ENCODE measurements at regions of chr6 and their contacts with region 1.

Region 1: DNA sequence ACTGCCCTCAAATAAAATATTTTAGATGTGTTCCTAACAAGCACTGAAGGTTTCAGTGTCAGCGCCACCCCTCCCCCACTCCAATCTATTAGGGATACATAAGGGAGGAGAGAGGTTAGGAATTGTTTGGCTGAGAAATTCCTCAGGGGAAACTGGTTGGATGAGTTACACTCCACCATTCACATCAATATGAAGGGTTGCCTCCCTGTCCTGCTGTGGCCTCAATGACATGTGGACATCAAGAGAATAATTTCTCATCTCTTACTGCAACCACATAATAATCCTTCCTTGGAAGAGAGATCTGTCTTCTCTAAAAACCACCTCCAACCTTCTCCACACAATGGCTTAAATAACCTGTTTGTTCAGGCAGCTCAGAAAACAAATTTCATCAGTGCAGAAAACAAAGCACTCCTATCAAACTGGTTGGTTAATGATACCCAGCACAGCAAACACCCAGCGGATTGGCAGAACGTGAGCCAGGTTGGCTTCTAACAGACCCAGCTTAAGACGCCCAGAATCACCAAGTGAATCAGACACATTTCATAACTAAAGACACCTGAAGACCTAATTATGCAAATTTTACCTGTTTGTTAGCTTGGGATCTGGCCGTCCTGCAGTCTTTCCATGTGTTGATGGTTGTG is 136.1 kb upstream of the SGK1 start:
- DNase-seq: peak; percentile 49
- H3K4me3 Mint-ChIP-seq: peak overlapping the region; percentile 42
- H3K27ac Mint-ChIP-seq: peak overlapping the region; percentile 19
- H3K4me1 Mint-ChIP-seq: peaks cover 26% of the 10 kb centered on the region
- H3K27me3 Mint-ChIP-seq: no peaks in the 10 kb centered on the region
- CTCF ChIP-seq: no peak

Region 2: DNA sequence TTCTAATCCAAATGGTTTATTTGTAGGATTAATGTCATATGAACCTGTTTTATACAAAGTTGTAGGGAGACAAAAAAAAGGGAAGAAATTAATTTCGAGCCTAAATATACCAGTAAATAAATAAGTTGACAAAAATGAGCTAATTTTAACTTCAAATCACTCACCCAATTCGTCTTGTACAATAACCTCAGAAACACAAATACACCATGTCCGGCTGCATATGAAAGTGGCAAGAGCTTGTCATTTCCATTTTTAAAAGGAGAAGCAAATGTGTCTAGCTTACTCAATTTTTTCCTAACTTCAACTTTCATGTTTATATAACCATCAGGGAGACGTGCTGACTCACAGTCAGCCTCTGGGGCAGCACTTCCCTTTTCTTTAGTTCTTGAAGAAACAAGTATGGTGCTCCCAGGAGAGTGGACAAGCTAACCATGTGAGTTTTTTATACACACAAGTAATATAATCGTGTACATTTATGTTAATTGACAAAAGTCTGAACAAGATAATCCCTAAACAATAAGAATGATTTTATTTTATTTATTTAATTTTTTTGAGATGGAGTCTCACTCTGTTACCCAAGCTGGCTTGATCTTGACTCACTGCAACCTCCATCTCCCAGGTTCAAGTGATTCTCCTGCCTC is 80.6 kb before region 1 on chr6:
- CTCF ChIA-PET with region 1: no interaction called
- intact Hi-C with region 1: no loop called
- DNase-seq: peak; percentile 4
- H3K4me3 Mint-ChIP-seq: no peak overlapping the region
- H3K27ac Mint-ChIP-seq: no peak overlapping the region
- H3K4me1 Mint-ChIP-seq: peaks cover 19% of the 10 kb centered on the region
- H3K27me3 Mint-ChIP-seq: no peaks in the 10 kb centered on the region
- CTCF ChIP-seq: no peak

Region 3: GRCh38 chr6:134436281-134436815 is 17.6 kb before region 1 on chr6:
- CTCF ChIA-PET with region 1: no interaction called
- intact Hi-C with region 1: no loop called
- DNase-seq: peak; percentile 60
- H3K4me3 Mint-ChIP-seq: peak overlapping the region; percentile 28
- H3K27ac Mint-ChIP-seq: peak overlapping the region; percentile 23
- H3K4me1 Mint-ChIP-seq: peaks cover 11% of the 10 kb centered on the region
- H3K27me3 Mint-ChIP-seq: no peaks in the 10 kb centered on the region
- CTCF ChIP-seq: no peak

Region 4: GRCh38 chr6:134491477-134491876 is 37.5 kb after region 1 on chr6:
- CTCF ChIA-PET with region 1: no interaction called
- intact Hi-C with region 1: loop called (anchors 5 kb)
- DNase-seq: peak; percentile 42
- H3K4me3 Mint-ChIP-seq: no peak overlapping the region
- H3K27ac Mint-ChIP-seq: peak overlapping the region; percentile 79
- H3K4me1 Mint-ChIP-seq: peaks cover 34% of the 10 kb centered on the region
- H3K27me3 Mint-ChIP-seq: no peaks in the 10 kb centered on the region
- CTCF ChIP-seq: no peak